ENCODE measurements at regions of chr1 and their contacts with region 1.

Region 1: GRCh38 chr1:25543425-25544242 is at the start of gene LDLRAP1:
- DNase-seq: peak; percentile 20 to 89 (median 78)

Region 2: DNA sequence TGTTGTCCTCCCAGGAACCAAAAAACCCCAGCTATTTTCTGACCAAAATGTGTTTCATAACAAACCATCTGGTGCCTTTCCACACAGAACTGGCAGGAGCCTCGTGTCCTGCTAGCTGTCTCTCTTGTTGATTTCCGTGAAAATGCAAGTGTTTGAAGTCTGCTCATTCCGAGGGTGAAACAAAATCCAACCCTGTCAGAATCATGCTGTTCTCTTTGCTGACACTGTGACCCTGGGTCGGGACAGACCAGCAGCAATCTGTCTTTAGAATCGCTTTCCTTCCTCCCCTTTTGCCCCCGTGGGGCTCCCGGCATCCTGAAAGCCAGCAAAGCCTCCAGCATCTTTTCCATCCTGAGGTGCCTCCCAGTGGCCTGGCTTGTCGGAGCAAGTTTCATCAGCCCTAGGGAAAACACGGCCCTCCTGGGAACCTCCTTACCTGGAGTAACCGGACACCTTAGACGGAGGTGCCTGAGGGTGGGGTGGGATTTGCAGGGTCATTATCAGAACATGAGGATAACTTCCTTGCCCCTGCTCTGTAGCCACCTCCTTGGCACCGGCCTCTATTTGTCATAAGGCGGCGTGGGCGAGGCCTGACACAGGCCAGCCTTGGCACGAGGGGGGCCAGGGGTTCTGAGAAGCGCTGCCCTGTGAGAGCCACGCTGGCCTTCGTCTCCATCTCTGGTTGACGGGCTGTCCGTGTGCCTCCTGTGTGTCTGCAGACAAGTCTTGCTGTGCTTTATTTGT is 24.6 kb after region 1 on chr1:
- intact Hi-C with region 1: loop called (anchors 2 kb)
- DNase-seq: peak in 15 of 42 donors; percentile 15 to 70 (median 50)

Region 3: DNA sequence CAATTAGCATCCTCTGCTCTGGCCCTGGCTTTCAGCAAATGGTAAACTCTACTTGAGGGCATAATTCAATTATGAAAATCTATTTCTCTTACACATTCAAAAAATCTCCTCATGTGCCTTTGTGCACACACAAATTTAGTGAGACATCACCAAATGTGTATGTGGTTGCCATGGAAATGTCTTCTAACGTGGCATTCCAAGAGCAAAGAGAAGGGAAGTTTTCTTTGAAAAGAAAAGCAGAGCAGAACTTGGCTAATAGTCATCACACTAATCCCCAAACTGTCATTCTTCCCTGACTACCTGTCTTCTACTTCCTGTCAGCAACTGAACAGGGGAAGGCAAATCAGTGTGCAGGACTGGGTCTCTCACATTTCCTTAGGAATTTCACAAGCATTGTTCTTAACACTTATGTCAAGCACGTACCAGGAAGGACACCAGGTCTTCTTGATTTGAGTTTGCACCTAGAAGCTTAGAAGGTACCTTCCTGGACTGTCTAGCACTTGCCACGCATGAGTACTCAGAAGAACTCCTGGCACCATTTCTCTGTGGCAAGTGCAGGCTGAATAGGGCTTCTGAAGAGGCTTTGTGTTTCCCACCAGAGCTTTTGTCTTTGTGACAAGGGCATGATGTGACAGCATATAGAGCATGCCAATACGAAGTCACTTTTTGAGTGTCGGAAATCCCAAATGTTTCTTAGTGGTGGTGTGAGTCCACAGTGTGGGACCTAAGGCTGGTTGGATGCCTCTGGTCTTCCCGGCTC is 105.2 kb after region 1 on chr1:
- intact Hi-C with region 1: no loop called
- DNase-seq: peak in 9 of 42 donors; percentile 12 to 53 (median 33)